ENCODE measurements at regions of chr9 and their contacts with region 1.

Region 1: DNA sequence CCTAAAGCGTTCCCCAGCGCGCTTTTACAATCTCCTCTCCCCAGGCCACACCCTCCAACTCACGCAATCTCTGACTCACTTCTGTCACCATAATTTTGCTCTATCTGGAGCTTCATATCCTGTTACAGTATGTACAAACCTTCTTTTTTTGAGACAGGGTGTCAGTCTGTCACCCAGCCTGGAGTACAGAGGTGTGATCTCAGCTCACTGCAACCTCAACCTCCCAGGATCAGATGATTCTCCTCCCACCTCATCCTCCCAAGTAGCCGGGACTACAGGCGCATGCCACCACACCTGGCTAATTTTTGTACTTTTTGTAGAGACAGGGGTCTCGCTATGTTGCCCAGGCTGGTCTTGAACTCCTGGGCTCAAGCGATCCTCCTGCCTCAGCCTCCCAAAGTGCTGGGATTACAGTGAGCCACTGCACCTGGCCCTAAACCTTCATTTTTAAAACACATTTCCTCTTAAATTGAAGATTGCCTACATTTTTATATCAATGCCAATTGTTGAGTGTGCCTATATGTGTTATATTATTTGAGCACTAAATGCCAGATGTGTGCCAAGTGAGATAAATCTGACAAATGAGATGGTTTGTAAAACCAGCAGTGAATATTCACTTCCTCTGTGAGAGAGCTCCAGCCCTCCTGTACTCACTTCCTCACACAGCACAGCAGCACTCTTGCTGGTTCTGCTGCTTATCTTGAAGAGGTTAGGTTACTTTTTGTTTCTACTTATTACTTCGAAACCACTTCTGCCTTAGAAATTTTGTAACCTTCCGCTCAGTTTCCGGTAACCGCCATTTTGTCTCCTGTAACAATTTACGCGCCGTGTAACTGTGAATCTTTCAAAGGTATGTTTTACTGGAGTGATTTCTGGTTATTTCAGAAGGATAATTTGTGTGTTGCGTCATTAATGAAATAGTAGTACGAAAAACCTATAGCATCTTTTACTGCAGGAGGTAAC is 57.9 kb downstream of the DOCK8 start:
- DNase-seq: peak; percentile 90
- ATAC-seq: peak; percentile 98
- H3K4me3 ChIP-seq: peak overlapping the region; percentile 44 to 98 (median 80)
- H3K4me3 Mint-ChIP-seq: peak overlapping the region; percentile 95
- H3K27ac ChIP-seq: peak overlapping the region; percentile 65 to 94
- H3K27ac Mint-ChIP-seq: peak overlapping the region; percentile 97
- H3K4me1 ChIP-seq: peaks cover 41 to 55% of the 10 kb centered on the region in 2 donors
- H3K4me1 Mint-ChIP-seq: peaks cover 51% of the 10 kb centered on the region
- H3K27me3 ChIP-seq: no peaks in the 10 kb centered on the region
- H3K27me3 Mint-ChIP-seq: no peaks in the 10 kb centered on the region
- CTCF ChIP-seq: no peak

Region 2: DNA sequence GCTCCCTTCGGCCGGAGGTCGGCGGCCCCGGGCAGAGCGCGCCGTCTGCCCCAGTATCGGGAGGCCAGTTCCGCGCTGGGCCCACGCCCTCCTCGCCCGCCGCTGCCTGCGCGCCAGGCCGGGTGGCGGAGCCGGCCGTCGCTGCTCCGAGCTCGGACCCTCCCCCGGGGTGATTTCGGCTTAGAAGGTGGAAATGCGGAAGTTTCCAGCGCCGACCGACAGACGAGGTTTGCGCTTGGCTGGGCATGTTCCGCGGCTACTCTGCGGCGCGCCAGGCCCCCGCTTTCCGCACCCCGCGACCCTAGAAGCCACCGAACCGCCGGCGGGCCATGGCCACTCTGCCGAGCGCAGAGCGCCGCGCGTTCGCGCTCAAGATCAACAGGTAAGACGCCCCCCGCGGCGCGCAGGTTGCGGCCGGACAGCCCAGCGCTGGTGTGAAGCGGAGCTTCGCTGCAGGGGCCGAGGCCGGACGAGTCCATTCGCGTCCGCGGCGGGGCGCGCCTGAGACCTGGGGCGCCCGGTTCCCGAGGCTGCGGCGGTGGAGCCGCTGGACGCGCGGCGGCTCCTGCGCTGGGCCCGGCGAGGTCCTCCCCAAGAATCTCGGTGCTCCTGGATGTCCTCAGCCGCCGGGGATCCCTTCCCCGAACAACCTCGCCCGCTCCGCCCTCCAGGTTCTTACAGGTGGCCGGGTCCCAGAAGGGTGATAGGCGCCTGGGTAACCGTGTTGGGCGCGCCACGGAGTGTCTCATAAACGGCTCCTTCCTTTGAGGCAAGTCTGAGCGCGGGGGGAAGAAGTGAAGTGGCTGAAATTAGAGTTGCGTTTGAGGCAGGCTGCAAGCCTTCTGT is 57.7 kb before region 1 on chr9 and contains the start of gene DOCK8:
- CTCF ChIA-PET with region 1: interaction called, 27 read pairs
- POLR2A ChIA-PET with region 1: interaction called, 17 read pairs
- intact Hi-C with region 1: loop called (anchors 1 kb)
- DNase-seq: peak; percentile 91
- ATAC-seq: peak; percentile 81
- H3K4me3 ChIP-seq: peak within 1 kb of the TSS; percentile 67 to 93 (median 79)
- H3K4me3 Mint-ChIP-seq: peak within 1 kb of the TSS; percentile 94
- H3K27ac ChIP-seq: peak within 1 kb of the TSS; percentile 61 to 90
- H3K27ac Mint-ChIP-seq: peak within 1 kb of the TSS; percentile 97
- H3K4me1 ChIP-seq: peaks cover 27 to 37% of the 10 kb centered on the region in 2 donors
- H3K4me1 Mint-ChIP-seq: peaks cover 41% of the 10 kb centered on the region
- H3K27me3 ChIP-seq: no peaks in the 10 kb centered on the region
- H3K27me3 Mint-ChIP-seq: no peaks in the 10 kb centered on the region
- CTCF ChIP-seq: peak; percentile 53
- total RNA-seq, gene DOCK8: 288 and 297 TPM in 2 replicates

Region 3: GRCh38 chr9:297104-297972 is 24.8 kb after region 1 on chr9:
- CTCF ChIA-PET with region 1: interaction called, 5 read pairs
- POLR2A ChIA-PET with region 1: no interaction called
- intact Hi-C with region 1: loop called (anchors 1 kb)
- DNase-seq: peak; percentile 81
- ATAC-seq: peak; percentile 94
- H3K4me3 ChIP-seq: peak overlapping the region in 2 of 5 experiments; percentile 5 to 8
- H3K4me3 Mint-ChIP-seq: peak overlapping the region; percentile 63
- H3K27ac ChIP-seq: peak overlapping the region; percentile 34 to 80
- H3K27ac Mint-ChIP-seq: peak overlapping the region; percentile 76
- H3K4me1 ChIP-seq: peaks cover 18 to 19% of the 10 kb centered on the region in 2 donors
- H3K4me1 Mint-ChIP-seq: peaks cover 28% of the 10 kb centered on the region
- H3K27me3 ChIP-seq: no peaks in the 10 kb centered on the region
- H3K27me3 Mint-ChIP-seq: no peaks in the 10 kb centered on the region
- CTCF ChIP-seq: no peak

Region 4: GRCh38 chr9:316382-316965 is 43.9 kb after region 1 on chr9:
- CTCF ChIA-PET with region 1: no interaction called
- POLR2A ChIA-PET with region 1: no interaction called
- intact Hi-C with region 1: no loop called
- DNase-seq: peak; percentile 12
- ATAC-seq: no peak
- H3K4me3 ChIP-seq: no peak overlapping the region
- H3K4me3 Mint-ChIP-seq: no peak overlapping the region
- H3K27ac ChIP-seq: peak overlapping the region in 1 of 2 donors; percentile 44
- H3K27ac Mint-ChIP-seq: no peak overlapping the region
- H3K4me1 ChIP-seq: no peaks in the 10 kb centered on the region
- H3K4me1 Mint-ChIP-seq: no peaks in the 10 kb centered on the region
- H3K27me3 ChIP-seq: no peaks in the 10 kb centered on the region
- H3K27me3 Mint-ChIP-seq: no peaks in the 10 kb centered on the region
- CTCF ChIP-seq: peak; percentile 13

Region 5: GRCh38 chr9:343773-344172 is 71.2 kb after region 1 on chr9:
- CTCF ChIA-PET with region 1: no interaction called
- POLR2A ChIA-PET with region 1: interaction called, 12 read pairs
- intact Hi-C with region 1: no loop called
- DNase-seq: no peak
- ATAC-seq: no peak
- H3K4me3 ChIP-seq: no peak overlapping the region
- H3K4me3 Mint-ChIP-seq: no peak overlapping the region
- H3K27ac ChIP-seq: no peak overlapping the region
- H3K27ac Mint-ChIP-seq: no peak overlapping the region
- H3K4me1 ChIP-seq: no peaks in the 10 kb centered on the region
- H3K4me1 Mint-ChIP-seq: no peaks in the 10 kb centered on the region
- H3K27me3 ChIP-seq: no peaks in the 10 kb centered on the region
- H3K27me3 Mint-ChIP-seq: no peaks in the 10 kb centered on the region
- CTCF ChIP-seq: no peak

Region 6: DNA sequence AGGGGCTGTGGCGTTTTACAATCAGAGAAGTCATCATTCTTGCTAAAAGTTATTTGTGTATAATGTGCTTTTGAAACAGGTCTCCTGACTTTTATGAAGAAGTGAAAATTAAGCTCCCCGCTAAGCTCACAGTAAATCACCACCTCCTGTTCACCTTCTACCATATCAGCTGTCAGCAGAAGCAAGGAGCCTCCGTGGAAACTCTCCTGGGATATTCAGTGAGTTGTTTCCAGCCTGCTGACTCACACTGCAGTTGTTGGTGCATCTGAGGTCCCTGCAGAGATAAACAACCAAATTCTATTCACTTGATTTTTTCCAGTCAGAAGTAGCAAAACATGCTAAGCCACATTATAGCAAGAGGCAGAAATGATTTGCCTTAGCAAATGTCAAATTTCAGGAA is 98.8 kb after region 1 on chr9:
- CTCF ChIA-PET with region 1: no interaction called
- POLR2A ChIA-PET with region 1: no interaction called
- intact Hi-C with region 1: no loop called
- DNase-seq: no peak
- ATAC-seq: no peak
- H3K4me3 ChIP-seq: no peak overlapping the region
- H3K4me3 Mint-ChIP-seq: no peak overlapping the region
- H3K27ac ChIP-seq: no peak overlapping the region
- H3K27ac Mint-ChIP-seq: no peak overlapping the region
- H3K4me1 ChIP-seq: no peaks in the 10 kb centered on the region
- H3K4me1 Mint-ChIP-seq: no peaks in the 10 kb centered on the region
- H3K27me3 ChIP-seq: no peaks in the 10 kb centered on the region
- H3K27me3 Mint-ChIP-seq: no peaks in the 10 kb centered on the region
- CTCF ChIP-seq: no peak

Region 7: DNA sequence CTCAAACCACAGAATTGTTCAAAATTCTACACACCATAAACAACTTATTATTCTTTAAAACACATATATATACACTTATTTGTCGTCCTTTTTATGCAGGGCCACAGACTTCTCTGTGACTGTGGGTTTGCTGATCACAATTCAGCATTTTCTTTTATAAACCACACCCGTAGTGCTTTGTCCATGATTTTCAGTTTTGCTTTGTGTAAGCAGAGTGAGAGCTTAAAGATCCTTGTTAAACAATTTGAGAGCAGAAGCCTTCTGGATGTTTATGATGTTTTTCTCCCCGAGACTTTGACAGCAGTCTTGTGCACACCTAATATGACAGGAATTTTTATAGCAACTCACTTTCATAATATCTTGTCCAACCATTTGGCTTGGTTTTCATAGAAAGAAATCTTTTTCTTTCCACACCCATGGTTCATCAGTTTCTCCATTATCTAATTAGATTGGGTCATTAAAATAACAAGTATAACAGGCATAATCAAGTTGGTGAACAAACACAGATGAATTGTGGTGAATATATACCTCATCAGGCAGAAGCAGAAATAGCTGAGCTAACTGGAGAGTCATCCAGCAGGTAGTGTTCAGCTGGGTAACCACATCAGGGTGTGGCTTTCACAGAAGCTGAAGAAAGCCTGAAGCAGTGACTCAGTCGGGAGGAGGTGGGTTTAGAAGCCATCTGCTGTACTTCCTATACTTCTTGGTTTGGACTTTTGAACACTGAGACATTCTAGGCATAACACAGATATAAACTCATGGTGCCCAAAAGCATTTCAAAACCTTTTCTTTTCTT is 174.9 kb after region 1 on chr9:
- CTCF ChIA-PET with region 1: no interaction called
- POLR2A ChIA-PET with region 1: interaction called, 12 read pairs
- intact Hi-C with region 1: no loop called
- DNase-seq: no peak
- ATAC-seq: no peak
- H3K4me3 ChIP-seq: no peak overlapping the region
- H3K4me3 Mint-ChIP-seq: no peak overlapping the region
- H3K27ac ChIP-seq: peak overlapping the region in 1 of 2 donors; percentile 39
- H3K27ac Mint-ChIP-seq: no peak overlapping the region
- H3K4me1 ChIP-seq: no peaks in the 10 kb centered on the region
- H3K4me1 Mint-ChIP-seq: peaks cover 6% of the 10 kb centered on the region
- H3K27me3 ChIP-seq: no peaks in the 10 kb centered on the region
- H3K27me3 Mint-ChIP-seq: no peaks in the 10 kb centered on the region
- CTCF ChIP-seq: no peak

Measured in B cell (primary cell).